Dorsolateral prefrontal cortex (tissue), 120 donors: ENCODE measurements at regions of chr4 and their contacts with region 1.

Region 1: GRCh38 chr4:2059034-2059725 is at the start of gene NAT8L:
- DNase-seq: peak; percentile 68 to 88 (median 84)
- H3K4me3 ChIP-seq: peak within 1 kb of the TSS; percentile 53 to 83 (median 72)
- H3K27ac ChIP-seq: peak within 1 kb of the TSS in 58 of 59 donors; percentile 55 to 95 (median 89)
- H3K27me3 ChIP-seq: no peaks in the 10 kb centered on the region
- CTCF ChIP-seq: no peak
- total RNA-seq, gene NAT8L: 89.4 to 267 (median 170) TPM

Region 2: GRCh38 chr4:2135083-2135482 is 75.9 kb after region 1 on chr4:
- intact Hi-C with region 1: loop called in 1 of 2 experiments (anchors 5 kb)
- DNase-seq: no peak
- H3K4me3 ChIP-seq: no peak overlapping the region
- H3K27ac ChIP-seq: no peak overlapping the region
- H3K27me3 ChIP-seq: no peaks in the 10 kb centered on the region
- CTCF ChIP-seq: no peak

Region 3: DNA sequence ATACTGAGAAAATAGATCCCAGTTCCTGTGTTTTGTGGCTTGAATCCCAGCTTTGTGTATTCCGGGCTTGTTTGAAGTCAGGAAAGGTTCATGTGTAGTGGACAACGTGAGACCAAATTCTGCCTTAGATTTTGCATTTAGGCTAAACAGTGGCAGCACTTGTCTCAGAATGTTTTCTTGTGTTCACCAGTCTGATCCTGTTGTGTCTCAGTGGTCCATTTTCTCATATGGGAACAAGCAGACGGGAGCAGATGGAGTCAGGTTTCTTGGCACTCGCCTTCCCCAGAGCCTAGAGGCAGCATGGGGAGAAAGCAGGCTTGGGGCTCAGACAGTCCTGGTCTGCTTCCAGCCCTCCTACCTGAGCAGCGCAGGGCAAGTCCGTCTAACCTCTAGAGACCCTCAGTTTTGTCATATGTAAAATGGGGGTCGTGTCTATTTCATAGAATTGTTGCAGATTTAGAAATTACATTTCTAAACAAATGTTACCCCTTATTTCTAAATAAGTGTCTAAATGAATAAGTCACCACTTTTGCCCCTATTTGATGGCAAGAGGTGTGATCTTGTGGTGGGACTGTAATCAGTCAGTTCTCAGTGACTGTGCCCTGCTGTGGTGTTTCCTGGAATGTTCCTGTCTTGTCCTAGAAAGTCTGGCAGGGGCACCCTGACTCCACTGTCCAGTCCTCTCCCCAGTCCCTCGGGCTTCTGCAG is 1161.5 kb after region 1 on chr4:
- intact Hi-C with region 1: no loop called
- DNase-seq: peak in 4 of 10 donors; percentile 29 to 82 (median 32)
- H3K4me3 ChIP-seq: no peak overlapping the region
- H3K27ac ChIP-seq: peak overlapping the region in 8 of 59 donors; percentile 3 to 70 (median 26)
- H3K27me3 ChIP-seq: no peaks in the 10 kb centered on the region
- CTCF ChIP-seq: no peak